ENCODE measurements at regions of chr17 and their contacts with region 1.

Region 1: DNA sequence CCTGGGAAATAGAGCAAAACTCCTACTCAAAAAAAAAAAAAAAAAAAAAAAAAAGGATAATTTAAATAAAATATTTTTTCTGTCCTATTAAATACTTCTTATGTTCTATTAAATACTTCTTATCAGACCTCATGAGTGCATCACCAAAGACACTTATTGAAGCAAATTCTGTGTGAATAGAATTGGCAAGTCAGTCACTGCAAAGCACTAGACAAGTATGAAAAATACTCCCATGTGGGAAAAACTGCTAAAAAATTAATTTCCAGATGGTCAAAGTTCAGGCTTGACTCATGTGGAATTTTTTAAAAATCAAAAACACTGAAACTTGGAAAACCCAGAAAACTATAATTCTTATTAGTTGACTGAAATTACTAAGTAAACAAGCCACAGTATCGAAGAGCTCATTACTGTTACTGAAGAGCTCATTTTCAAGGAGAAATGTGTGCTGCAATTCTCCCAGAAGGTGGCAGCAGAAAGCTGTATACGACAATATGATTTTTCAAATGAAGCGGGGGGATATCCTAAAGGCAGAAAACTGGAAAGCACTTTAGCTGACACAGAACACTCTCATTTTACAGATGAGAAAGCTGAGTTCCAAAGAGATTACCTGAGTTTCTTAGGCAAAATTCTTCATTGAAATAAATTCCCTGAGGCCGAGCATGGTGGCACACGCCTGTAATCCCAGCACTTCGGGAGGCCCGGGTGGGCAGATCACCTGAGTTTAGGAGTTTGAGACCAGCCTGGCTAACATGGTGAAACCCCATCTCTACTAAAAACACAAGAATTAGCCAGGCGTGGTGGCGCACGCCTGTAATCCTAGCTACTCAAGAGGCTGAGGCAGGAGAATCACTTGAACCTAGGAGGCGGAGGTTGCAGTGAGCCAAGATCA is 15.9 kb upstream of the FBXO47 start:
- DNase-seq: peak; percentile 50
- H3K4me3 ChIP-seq: no peak overlapping the region
- H3K27ac ChIP-seq: no peak overlapping the region
- H3K27me3 ChIP-seq: no peaks in the 10 kb centered on the region
- CTCF ChIP-seq: peak; percentile 82

Region 2: DNA sequence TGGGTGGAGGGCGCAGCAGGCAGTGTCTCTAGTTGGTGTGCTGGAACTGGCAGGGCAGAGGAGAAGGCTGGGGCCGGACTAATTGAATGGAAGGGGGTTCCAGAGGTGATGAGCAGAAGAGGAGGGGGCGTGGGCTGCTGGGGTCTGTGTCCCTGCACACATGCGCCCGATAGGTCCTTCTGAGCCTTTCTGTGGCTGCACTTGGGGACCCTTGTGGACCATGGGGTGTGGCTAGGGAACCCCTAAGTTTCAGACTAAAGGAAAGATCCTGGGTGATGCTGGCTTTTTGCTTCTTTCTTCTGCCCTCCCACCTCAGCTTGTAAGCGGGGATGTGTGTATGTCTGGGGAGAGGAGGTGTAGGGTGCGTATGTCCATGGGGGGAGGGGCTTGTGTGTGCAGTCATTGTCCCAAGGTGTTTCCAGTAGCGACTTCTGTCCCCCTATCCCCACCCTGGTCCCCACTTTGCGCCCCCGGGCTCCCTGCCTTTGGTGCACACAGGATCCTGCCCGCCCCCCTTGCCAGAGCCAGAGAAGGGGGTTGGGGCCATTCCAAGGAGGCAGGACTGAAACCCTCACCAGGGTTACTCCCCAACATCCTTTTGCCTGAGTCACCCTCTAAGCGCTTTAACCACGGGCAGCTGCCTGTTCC is 471.9 kb before region 1 on chr17:
- CTCF ChIA-PET with region 1: no interaction called
- POLR2A ChIA-PET with region 1: no interaction called
- DNase-seq: no peak
- H3K4me3 ChIP-seq: no peak overlapping the region
- H3K27ac ChIP-seq: no peak overlapping the region
- H3K27me3 ChIP-seq: no peaks in the 10 kb centered on the region
- CTCF ChIP-seq: no peak

Region 3: DNA sequence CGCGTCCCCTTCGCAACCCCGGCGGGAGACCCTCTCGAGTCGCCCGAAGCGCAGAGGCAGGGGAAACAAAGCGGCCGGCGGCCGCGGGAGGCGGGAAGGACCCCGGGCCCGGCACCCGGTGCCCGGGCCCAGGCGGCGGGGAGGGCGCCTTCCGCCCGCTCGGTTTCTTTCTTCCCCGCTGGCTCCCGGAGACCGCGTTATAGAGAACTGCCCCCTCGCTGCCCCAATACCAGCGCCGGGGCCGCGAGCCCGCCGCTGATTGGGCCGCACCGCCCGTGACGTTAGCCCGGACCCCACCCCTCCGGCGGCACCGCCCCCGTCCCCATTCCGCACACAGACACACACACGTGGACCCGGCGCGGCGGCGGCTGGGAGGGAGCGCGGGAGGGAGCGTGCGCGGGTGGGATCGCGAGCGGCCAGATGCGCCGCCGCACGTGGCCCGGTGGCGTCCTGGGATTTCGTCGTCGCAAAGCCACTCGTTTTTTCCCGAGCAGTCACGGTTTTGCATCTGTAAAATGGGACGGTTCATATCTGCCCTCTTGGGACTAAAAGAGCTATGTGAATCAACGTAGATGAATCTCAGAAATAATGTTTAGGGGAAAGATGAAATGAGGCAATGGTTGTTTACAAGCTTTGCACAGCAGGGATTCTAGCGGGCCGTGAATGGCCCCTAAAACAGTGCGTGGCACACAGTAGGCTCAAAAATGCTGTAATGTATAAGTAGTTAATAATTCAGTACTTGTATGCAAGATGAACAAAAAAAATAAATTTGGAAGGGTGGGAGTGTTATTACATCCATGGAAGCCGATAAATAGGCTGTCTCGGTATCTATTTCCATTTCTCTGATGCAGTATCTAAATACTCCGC is 308.1 kb before region 1 on chr17 and contains the start of gene EPOP:
- CTCF ChIA-PET with region 1: no interaction called
- POLR2A ChIA-PET with region 1: no interaction called
- DNase-seq: peak; percentile 43
- H3K4me3 ChIP-seq: peak within 1 kb of the TSS; percentile 45
- H3K27ac ChIP-seq: no peak within 1 kb of the TSS
- H3K27me3 ChIP-seq: peaks cover 44% of the 10 kb centered on the region
- CTCF ChIP-seq: no peak
- polyA plus RNA-seq, gene EPOP: 0.16 and 0.17 TPM in 2 replicates

Region 4: GRCh38 chr17:38912221-38912813 is 70.8 kb before region 1 on chr17:
- CTCF ChIA-PET with region 1: no interaction called
- POLR2A ChIA-PET with region 1: no interaction called
- DNase-seq: no peak
- H3K4me3 ChIP-seq: no peak overlapping the region
- H3K27ac ChIP-seq: peak overlapping the region; percentile 11
- H3K27me3 ChIP-seq: no peaks in the 10 kb centered on the region
- CTCF ChIP-seq: no peak

Region 5: DNA sequence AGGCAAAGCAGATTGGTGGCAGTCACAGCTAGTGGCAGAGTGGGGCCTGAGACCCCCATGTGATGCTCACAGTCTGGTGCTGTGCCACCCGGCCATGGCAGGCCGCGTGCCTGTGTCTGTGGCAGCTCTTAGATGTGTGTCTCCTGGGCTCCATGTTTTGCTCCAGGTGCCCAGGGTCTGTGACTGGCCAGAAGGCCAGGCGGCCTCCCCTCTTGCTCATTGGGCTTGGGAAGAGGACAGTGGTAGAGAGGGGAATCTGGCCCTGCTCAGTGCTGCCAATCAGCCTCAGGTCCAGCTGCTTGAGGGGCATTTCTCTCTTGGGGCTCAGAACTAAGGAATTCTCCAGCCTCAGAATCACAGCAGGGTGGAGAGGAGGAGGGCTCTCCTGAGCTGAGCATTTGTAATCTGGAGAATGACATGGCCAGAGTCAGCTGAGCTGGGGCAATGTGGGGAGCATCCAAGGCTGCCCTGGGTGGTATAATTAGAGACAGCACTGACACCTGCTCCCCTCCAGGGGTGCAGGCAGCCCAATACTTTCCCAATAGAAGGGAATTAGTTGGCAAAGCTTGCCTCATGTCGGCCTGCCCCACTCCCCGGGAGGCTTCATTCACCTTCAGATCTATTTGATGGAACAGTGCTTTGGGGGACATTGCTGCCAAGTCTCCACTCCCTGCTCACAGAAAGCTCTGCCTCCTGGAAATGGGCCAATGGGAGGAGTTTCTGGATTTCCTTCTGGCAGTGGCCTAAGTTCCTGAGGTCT is 60.4 kb before region 1 on chr17:
- CTCF ChIA-PET with region 1: interaction called, 19 read pairs
- POLR2A ChIA-PET with region 1: no interaction called
- DNase-seq: no peak
- H3K4me3 ChIP-seq: no peak overlapping the region
- H3K27ac ChIP-seq: peak overlapping the region; percentile 39
- H3K27me3 ChIP-seq: no peaks in the 10 kb centered on the region
- CTCF ChIP-seq: no peak

Region 6: GRCh38 chr17:38967290-38967738 is 15.8 kb before region 1 on chr17 and contains the start of gene FBXO47:
- CTCF ChIA-PET with region 1: interaction called, 16 read pairs
- POLR2A ChIA-PET with region 1: no interaction called
- DNase-seq: peak; percentile 51
- H3K4me3 ChIP-seq: peak within 1 kb of the TSS; percentile 20; the same call in 1 of the 2 replicates
- H3K27ac ChIP-seq: peak within 1 kb of the TSS; percentile 31
- H3K27me3 ChIP-seq: no peaks in the 10 kb centered on the region
- CTCF ChIP-seq: peak; percentile 6; the same call in 1 of the 2 replicates
- polyA plus RNA-seq, gene FBXO47: not detected in 2 replicates

Region 7: DNA sequence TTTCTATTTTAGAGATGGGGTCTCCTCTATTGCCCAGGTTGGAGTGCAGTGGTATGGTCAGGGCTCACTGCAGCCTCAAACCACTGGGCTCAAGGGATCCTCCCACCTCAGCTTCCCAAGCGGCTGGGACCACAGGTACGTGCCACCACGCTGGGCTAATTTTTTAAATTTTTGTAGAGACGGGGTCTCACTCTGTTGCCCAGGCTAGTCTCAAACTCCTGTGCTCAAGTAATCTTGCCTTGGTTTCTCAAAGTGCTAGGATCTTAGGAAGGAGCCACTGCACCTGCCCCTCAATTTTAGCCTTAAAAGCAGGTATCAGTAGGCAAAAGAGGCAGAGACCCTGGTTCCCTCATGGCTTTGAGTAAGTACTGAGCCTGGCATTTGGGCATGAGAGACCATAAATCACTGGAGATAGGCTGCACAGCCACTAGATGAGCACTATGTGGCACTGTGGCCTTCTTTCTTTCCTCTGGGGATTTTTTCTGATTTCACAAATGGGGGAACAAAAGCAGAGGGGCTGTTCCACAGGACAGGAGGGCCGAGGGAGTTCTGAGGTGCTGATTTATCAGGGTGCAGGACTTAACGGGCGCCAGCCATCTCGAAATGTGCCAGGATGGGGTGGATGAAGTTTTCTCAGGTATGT is 86.1 kb after region 1 on chr17:
- CTCF ChIA-PET with region 1: interaction called, 24 read pairs
- POLR2A ChIA-PET with region 1: no interaction called
- DNase-seq: no peak
- H3K4me3 ChIP-seq: no peak overlapping the region
- H3K27ac ChIP-seq: no peak overlapping the region
- H3K27me3 ChIP-seq: peaks cover 49% of the 10 kb centered on the region
- CTCF ChIP-seq: peak; percentile 77

Region 8: GRCh38 chr17:39164675-39165143 is 181.6 kb after region 1 on chr17:
- CTCF ChIA-PET with region 1: interaction called, 41 read pairs
- POLR2A ChIA-PET with region 1: no interaction called
- DNase-seq: peak; percentile 76
- H3K4me3 ChIP-seq: peak overlapping the region; percentile 63
- H3K27ac ChIP-seq: no peak overlapping the region
- H3K27me3 ChIP-seq: peaks cover 32% of the 10 kb centered on the region
- CTCF ChIP-seq: peak; percentile 87

Region 9: DNA sequence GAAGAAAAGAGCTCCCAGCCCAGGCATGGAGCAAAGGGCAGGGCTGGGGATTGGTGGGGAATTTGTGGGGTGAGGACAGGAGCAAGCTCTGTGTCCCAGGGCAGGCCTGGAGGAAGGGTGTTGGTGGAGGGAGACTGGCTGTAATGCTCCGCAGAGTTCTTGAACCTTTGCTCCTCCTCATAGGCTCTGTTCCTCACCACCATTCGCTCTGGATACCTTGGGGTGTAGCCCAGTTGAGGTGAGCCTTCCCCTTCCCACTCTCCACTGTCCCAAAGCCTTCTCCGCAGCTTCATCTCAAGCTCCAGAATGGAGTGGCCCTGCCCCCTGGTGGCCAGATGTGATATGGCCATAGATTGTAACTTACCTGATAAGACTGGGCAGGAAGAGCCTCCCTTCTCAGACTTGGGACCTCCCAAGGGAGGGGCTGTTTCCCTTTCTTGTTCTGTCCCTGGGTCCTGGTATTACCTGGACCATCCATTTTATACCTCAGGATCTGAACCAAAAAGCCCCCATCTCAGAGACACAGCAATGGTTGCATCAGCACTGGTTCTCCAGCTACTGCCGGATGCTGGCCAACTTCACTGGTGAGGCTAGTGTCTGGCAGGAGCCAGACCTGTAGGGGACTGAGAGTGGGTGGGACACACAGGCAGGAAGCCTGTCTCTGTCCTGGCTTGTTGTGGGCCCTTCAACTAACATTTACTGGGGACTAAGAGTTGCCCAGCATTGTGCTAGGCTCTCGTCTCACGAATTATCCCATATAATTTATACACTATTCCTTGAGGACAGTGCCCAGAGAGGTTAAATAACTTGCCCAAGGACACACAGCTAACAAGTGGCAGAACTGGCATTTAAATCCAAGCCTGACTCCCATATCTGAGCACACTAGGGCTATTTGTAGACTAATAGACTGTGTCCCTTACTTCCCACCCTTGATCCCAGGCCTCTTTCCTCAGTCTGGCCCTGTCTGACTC is 261.8 kb after region 1 on chr17:
- CTCF ChIA-PET with region 1: interaction called, 38 read pairs
- POLR2A ChIA-PET with region 1: no interaction called
- DNase-seq: peak; percentile 54
- H3K4me3 ChIP-seq: no peak overlapping the region
- H3K27ac ChIP-seq: no peak overlapping the region
- H3K27me3 ChIP-seq: no peaks in the 10 kb centered on the region
- CTCF ChIP-seq: peak; percentile 97